ENCODE measurements at regions of chr10 and their contacts with region 1.

Region 1: DNA sequence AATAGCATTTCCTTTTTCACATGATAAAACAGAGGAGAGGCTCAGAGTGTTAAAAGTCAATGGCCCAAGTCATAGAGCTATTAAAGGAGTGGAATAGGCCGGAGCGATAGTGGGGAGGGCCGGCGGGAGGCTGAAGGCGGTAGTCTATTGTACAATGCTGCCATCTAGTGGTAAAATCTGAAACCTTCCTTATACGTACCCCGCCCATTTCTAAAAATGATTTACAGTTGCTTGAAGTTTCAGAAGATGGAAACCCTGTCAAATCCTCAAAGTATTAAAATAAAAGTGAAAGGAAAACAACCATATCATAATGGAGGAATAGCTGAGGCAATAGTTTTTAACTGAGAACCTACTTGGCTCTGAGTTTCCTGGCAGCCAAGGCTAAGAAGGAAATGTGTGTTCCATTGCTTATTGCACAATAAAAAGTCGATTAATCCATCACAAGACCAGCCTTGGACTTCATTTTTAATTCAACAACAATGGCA is 209.1 kb downstream of the CCSER2 start:
- DNase-seq: peak; percentile 32
- H3K4me3 ChIP-seq: no peak overlapping the region
- H3K27ac ChIP-seq: no peak overlapping the region
- H3K4me1 ChIP-seq: peaks cover 36% of the 10 kb centered on the region
- H3K27me3 ChIP-seq: no peaks in the 10 kb centered on the region
- CTCF ChIP-seq: peak; percentile 48 to 72

Region 2: GRCh38 chr10:84205049-84205852 is 332.2 kb before region 1 on chr10:
- CTCF ChIA-PET with region 1: no interaction called
- dilution Hi-C with region 1: no loop called
- in situ Hi-C with region 1: no loop called
- intact Hi-C with region 1: loop called (anchors 5 kb)
- DNase-seq: peak; percentile 42
- H3K4me3 ChIP-seq: no peak overlapping the region
- H3K27ac ChIP-seq: no peak overlapping the region
- H3K4me1 ChIP-seq: no peaks in the 10 kb centered on the region
- H3K27me3 ChIP-seq: no peaks in the 10 kb centered on the region
- CTCF ChIP-seq: peak; percentile 99

Region 3: DNA sequence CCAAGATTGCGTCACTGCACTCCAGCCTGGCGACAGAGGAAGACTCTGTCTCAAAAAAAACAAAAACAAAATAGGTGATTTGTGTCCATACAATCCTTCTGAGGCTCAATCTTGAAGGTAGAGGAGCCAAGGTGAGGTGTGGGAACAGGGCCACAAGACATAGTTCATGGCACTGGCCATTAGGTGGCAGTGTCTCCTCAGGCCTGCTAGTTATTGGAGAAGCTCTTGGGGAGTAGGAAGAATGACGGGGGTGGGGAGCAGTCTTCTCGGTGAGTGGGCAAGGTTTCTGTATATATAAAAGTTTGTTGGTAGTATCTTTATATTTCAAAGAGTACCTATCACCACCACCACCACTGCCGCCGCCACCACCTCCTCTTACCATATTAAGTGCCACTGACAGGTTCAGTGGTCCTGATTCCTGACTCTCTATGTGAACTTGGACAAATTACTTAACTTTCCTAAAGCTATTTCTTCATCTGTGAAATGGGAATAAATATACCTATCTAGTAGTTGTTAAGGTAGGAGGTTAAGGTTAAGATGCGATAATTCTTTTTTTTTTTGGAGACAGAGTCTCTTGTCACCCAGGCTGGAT is 185.1 kb before region 1 on chr10:
- CTCF ChIA-PET with region 1: interaction called, 3 read pairs
- dilution Hi-C with region 1: no loop called
- in situ Hi-C with region 1: no loop called
- intact Hi-C with region 1: loop called (anchors 1 kb)
- DNase-seq: peak; percentile 62
- H3K4me3 ChIP-seq: no peak overlapping the region
- H3K27ac ChIP-seq: no peak overlapping the region
- H3K4me1 ChIP-seq: peaks cover 5% of the 10 kb centered on the region
- H3K27me3 ChIP-seq: no peaks in the 10 kb centered on the region
- CTCF ChIP-seq: peak; percentile 89 to 93

Region 4: GRCh38 chr10:84429926-84430520 is 107.5 kb before region 1 on chr10:
- CTCF ChIA-PET with region 1: interaction called, 10 read pairs
- dilution Hi-C with region 1: no loop called
- in situ Hi-C with region 1: no loop called
- intact Hi-C with region 1: loop called (anchors 1 kb)
- DNase-seq: peak; percentile 61
- H3K4me3 ChIP-seq: no peak overlapping the region
- H3K27ac ChIP-seq: no peak overlapping the region
- H3K4me1 ChIP-seq: peaks cover 16% of the 10 kb centered on the region
- H3K27me3 ChIP-seq: no peaks in the 10 kb centered on the region
- CTCF ChIP-seq: peak; percentile 85 to 93

Region 5: DNA sequence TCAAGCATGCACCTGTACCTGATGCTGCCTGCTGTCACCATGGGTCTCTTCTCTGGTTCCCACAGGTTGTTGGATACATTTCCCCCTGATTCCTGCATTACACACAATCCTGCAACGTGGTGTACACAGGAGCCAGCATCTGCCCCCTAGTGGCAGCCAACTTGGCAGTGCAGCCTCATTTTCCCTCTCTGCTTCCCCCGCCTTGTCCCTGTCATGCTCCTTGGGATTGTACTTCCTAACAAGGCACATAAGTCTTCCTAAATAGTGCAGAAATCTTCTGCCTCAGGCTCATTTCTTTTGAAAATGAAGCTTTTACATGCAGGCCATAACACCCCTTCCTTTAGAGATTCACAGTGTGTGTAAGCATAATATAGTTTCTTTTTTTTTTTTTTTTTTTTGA is 178.4 kb after region 1 on chr10:
- CTCF ChIA-PET with region 1: no interaction called
- dilution Hi-C with region 1: no loop called
- in situ Hi-C with region 1: no loop called
- intact Hi-C with region 1: loop called (anchors 2 kb)
- DNase-seq: peak; percentile 26
- H3K4me3 ChIP-seq: no peak overlapping the region
- H3K27ac ChIP-seq: no peak overlapping the region
- H3K4me1 ChIP-seq: no peaks in the 10 kb centered on the region
- H3K27me3 ChIP-seq: no peaks in the 10 kb centered on the region
- CTCF ChIP-seq: peak; percentile 89 to 96

Region 6: DNA sequence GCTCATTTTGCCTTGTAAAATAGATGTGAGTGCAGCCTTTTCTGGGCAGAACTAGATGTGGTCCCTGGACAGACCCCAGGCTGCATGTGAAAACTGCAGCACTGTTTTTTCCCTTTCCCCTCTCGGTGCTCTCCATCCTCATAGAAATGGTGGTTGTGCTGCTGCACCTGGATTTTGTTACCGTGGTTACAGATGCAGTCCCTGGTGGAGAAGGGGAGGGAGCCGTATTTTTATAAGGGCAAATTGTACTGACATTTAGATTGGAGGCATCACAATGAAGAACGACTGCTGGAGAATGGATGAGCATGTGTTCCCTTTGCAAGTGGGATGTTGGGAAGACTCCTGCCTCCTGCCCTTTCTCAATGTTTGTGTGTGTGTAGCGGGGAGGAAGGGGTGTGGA is 260.8 kb after region 1 on chr10:
- CTCF ChIA-PET with region 1: no interaction called
- dilution Hi-C with region 1: no loop called
- in situ Hi-C with region 1: no loop called
- intact Hi-C with region 1: no loop called
- DNase-seq: no peak
- H3K4me3 ChIP-seq: no peak overlapping the region
- H3K27ac ChIP-seq: no peak overlapping the region
- H3K4me1 ChIP-seq: no peaks in the 10 kb centered on the region
- H3K27me3 ChIP-seq: no peaks in the 10 kb centered on the region
- CTCF ChIP-seq: no peak

Region 7: DNA sequence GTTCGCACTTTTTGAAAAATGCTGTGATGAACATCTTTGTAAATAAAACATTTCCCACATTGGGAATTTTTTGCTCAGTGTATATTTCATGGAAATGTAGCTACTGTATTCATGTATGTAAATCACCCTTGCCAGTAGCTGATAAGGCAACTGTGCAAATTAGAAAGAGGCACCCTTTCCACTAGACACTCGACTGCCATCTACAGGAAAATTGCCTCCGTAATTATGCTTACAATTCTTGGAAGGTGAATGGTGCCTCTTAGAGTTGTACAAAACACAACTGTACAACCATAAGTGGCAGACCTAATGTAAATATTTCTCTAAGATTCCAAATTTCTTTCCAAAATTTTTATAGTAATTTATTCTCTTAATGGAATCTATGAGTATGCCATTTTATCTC is 282.6 kb after region 1 on chr10:
- CTCF ChIA-PET with region 1: no interaction called
- dilution Hi-C with region 1: no loop called
- in situ Hi-C with region 1: no loop called
- intact Hi-C with region 1: loop called (anchors 5 kb)
- DNase-seq: no peak
- H3K4me3 ChIP-seq: no peak overlapping the region
- H3K27ac ChIP-seq: no peak overlapping the region
- H3K4me1 ChIP-seq: peaks cover 17% of the 10 kb centered on the region
- H3K27me3 ChIP-seq: peaks cover 3% of the 10 kb centered on the region
- CTCF ChIP-seq: peak; percentile 11 to 41

Region 8: GRCh38 chr10:86376852-86377796 is 1839.6 kb after region 1 on chr10:
- CTCF ChIA-PET with region 1: no interaction called
- dilution Hi-C with region 1: no loop called
- in situ Hi-C with region 1: no loop called
- intact Hi-C with region 1: loop called (anchors 10 kb)
- DNase-seq: peak; percentile 52
- H3K4me3 ChIP-seq: peak overlapping the region in 1 of 3 experiments; percentile 32
- H3K27ac ChIP-seq: no peak overlapping the region
- H3K4me1 ChIP-seq: peaks cover 4% of the 10 kb centered on the region
- H3K27me3 ChIP-seq: no peaks in the 10 kb centered on the region
- CTCF ChIP-seq: peak; percentile 89 to 93

Measured in mammary epithelial cell (primary cell).